ENCODE measurements at regions of chr9 and their contacts with region 1.

Region 1: GRCh38 chr9:134263596-134263995 is 62.7 kb upstream of the RXRA start:
- DNase-seq: no peak

Region 2: DNA sequence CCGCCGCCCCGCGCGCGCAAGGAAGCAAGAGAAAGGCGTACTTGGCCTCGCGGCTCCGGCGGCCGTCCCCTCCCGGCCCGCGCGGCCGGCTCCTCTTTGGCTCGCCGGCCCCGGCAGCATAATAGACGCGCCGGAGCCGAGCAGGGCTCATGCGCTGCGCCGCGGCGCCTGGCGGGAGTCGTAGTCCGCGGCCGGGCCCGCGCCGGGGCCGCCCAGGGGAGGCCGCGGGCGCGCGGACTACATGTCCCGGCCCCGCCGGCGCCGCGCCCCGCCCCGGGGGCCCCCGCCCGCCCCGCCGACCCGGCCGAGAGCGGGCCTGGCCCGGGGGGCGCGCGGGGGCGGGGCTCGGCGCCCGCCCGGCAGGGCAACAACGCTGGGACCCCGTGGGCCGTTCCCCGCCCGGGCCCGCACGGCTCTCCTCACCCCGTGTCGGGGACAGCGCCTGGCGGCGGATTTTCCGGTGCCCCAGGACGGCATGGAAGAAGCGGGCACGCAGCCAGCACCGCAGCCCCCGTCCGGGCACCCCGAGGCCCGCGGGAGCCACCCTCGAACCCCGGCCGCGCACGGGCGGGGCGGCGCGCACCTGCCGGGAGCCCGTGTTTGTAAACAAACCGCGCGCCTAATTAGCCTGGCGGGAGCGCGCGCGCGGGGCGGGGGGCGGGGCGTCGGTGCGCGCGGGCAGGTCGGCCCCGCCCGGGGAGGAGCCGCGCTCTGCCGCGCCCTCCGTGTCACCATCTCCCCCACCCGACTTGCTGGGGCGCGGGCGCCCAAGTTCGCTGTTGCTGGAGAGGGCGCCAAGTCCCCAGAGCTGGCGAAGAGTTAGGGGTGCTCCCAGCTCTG is 195.5 kb before region 1 on chr9 and contains the start of gene BRD3:
- in situ Hi-C with region 1: no loop called
- DNase-seq: peak; percentile 83
- total RNA-seq, gene BRD3: 5.9 and 7.3 TPM in 2 replicates

Region 3: GRCh38 chr9:134178768-134179551 is 84.6 kb before region 1 on chr9:
- in situ Hi-C with region 1: no loop called
- DNase-seq: no peak

Region 4: DNA sequence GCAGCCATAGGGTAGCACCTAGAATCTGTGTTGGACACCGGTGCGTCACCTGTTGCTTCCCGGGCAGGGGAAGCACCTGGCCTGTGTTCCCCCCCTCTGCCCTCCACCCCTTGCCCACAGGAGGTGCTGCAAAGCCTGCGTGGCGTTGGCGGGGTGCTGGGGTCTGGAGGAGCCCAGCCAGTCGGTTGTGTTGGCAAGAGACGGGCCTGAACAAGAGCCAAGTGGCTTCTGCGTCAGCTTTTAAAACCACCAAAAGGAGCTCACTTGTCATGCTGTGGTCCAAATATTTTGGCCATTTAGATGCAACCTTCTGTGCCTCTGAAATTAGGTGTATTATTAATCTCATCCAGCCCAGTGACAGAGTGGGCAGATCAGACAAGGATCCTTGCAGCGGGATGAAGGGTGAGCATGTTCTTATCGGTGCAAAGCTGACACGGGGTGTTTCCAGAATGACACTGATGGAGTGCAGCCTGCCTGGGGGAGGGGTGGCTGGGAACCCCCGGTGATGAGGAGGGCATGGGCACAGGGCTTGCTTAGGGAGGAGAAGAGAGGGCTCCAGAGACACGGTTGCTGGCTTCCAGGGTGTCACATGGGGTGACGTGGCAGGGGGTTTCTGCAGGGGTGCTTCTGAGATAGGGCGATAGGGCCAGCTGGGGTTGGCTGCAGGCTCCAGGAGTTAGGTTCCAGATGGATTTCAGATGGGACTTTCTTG is 53.0 kb after region 1 on chr9:
- in situ Hi-C with region 1: loop called (anchors 5 kb)
- DNase-seq: peak; percentile 53

Measured in G401 (cell line).